OCI-LY7 (cell line): ENCODE measurements at regions of chr1 and their contacts with region 1.

Region 1: GRCh38 chr1:48552420-48552819 is 80.4 kb upstream of the SPATA6 start:
- DNase-seq: peak; percentile 20
- H3K4me3 ChIP-seq: no peak overlapping the region
- H3K27ac ChIP-seq: no peak overlapping the region
- H3K4me1 ChIP-seq: no peaks in the 10 kb centered on the region
- CTCF ChIP-seq: peak; percentile 61

Region 2: GRCh38 chr1:48677306-48678287 is 125.2 kb after region 1 on chr1:
- CTCF ChIA-PET with region 1: no interaction called
- POLR2A ChIA-PET with region 1: no interaction called
- intact Hi-C with region 1: no loop called
- DNase-seq: peak; percentile 75
- H3K4me3 ChIP-seq: no peak overlapping the region
- H3K27ac ChIP-seq: no peak overlapping the region
- H3K4me1 ChIP-seq: no peaks in the 10 kb centered on the region
- CTCF ChIP-seq: peak; percentile 85

Region 3: DNA sequence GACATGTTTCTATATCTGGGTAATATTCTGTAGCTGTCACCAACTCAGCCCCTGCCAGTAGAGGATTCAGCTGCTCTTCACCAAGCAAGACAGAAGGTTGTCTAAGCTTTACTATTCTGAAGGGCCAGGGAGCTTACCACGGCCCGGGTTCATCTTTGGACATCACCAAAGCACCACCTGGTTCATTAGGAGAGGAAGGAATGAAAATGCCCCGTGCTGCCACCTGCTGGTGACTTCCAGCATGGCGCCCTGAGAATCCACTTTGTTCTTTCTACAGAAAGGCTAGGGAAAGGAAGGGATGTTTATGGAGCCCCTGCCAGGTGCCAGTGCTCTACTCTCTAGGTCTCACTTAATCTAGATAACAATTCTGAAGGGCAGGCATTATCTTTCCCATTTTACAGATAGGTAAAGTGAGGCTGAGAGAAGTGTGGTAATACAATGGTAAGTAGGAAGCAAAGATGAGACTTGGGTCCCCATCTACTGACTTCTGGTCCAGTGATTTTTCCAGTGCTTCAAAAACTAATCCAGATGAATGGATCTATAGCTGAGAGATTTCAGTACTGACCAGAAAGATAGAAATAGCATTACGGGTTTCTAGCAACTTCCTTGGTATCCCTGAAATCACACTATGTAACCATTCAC is 144.8 kb after region 1 on chr1:
- CTCF ChIA-PET with region 1: no interaction called
- POLR2A ChIA-PET with region 1: no interaction called
- intact Hi-C with region 1: loop called (anchors 10 kb)
- DNase-seq: peak; percentile 49
- H3K4me3 ChIP-seq: no peak overlapping the region
- H3K27ac ChIP-seq: no peak overlapping the region
- H3K4me1 ChIP-seq: no peaks in the 10 kb centered on the region
- CTCF ChIP-seq: peak; percentile 93